GM12878 (cell line): ENCODE measurements at regions of chr11 and their contacts with region 1.

Region 1: DNA sequence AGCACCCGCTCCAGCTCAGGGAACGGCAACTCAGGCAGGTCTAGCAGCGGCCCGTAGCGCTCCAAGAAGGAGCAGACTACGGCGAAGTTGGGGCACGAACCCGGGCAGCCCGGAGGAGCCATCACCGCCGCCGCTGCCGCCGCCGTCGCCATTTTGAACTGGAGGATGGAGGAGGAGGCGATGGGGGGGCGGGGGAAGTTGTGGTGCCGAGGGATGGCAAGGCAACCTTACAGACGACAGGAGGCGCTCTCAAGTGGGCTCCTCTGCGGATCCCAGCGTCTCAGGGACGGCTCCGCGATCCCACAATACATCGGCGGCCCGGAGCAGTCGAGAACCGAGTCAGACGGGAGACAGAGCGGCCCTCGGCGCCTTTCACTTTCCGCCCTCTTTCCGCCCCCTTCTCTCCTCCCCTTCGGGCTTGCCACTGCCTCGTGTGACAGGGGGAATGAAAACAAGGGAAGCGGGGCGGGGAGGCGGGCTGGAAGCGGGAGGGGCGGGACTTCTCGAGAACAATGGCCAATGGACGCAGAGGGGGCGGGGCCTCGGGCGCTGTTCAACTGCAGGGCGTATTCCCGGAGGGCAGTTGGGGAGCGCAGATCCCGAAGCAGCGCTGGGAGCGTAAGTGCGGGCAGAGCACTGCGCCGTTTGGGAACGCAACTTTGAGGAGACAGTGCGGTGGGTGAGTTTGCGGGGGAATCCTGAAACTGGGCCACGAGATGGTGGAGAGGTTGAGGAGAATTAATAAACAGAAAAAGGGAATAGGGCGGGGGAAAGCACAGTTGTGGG is at the starts of genes AAMDC and RSF1:
- DNase-seq: peak; percentile 94
- ATAC-seq: peak; percentile 91
- H3K4me3 ChIP-seq: peak within 1 kb of the TSS; percentile 97
- H3K27ac ChIP-seq: peak within 1 kb of the TSS; percentile 89
- H3K4me1 ChIP-seq: peaks cover 3% of the 10 kb centered on the region; the same call in 1 of the 2 replicates
- H3K27me3 ChIP-seq: no peaks in the 10 kb centered on the region
- CTCF ChIP-seq: peak; percentile 67 to 82 (median 77)
- EP300 ChIP-seq: peak in 1 of 2 experiments; percentile 15; a peak in 1 of 4 replicates
- POLR2A ChIP-seq: peak; percentile 82
- RAD21 ChIP-seq: peak; percentile 55
- polyA plus RNA-seq, gene AAMDC: 37.1 to 38.3 TPM
- polyA plus RNA-seq, gene RSF1: 9.0 to 25.4 TPM

Region 2: GRCh38 chr11:77418155-77418970 is 402.4 kb before region 1 on chr11:
- CTCF ChIA-PET with region 1: no interaction called
- POLR2A ChIA-PET with region 1: no interaction called
- RAD21 ChIA-PET with region 1: no interaction called
- SMC1A ChIA-PET with region 1: no interaction called
- in situ Hi-C with region 1: no loop called
- intact Hi-C with region 1: no loop called
- DNase-seq: no peak
- ATAC-seq: peak; percentile 93
- H3K4me3 ChIP-seq: peak overlapping the region; percentile 31; the same call in 1 of the 2 replicates
- H3K27ac ChIP-seq: peak overlapping the region; percentile 67
- H3K4me1 ChIP-seq: peaks cover 8% of the 10 kb centered on the region
- H3K27me3 ChIP-seq: no peaks in the 10 kb centered on the region
- CTCF ChIP-seq: no peak
- EP300 ChIP-seq: no peak
- POLR2A ChIP-seq: no peak
- RAD21 ChIP-seq: no peak

Region 3: DNA sequence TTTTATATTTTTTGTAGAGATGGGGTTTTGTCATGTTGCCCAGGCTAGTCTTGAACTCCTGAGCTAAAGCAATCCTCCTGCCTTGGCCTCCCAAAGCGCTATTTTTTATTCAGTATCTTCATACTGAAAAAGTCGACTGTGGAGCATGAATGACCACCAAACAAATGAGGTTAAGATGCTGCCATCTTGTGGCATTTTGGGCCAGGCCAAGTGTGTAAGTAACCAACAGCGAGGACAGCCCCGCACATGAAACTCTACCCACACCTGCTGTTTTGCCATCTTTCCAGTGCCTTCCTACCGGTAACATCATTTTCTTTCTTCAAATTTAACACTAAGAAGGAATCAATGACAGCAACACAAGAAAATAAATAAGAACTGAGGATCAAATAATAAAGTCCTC is 263.2 kb before region 1 on chr11:
- CTCF ChIA-PET with region 1: no interaction called
- POLR2A ChIA-PET with region 1: no interaction called
- RAD21 ChIA-PET with region 1: no interaction called
- SMC1A ChIA-PET with region 1: no interaction called
- in situ Hi-C with region 1: no loop called
- intact Hi-C with region 1: no loop called
- DNase-seq: no peak
- ATAC-seq: peak; percentile 53
- H3K4me3 ChIP-seq: no peak overlapping the region
- H3K27ac ChIP-seq: no peak overlapping the region
- H3K4me1 ChIP-seq: no peaks in the 10 kb centered on the region
- H3K27me3 ChIP-seq: no peaks in the 10 kb centered on the region
- CTCF ChIP-seq: peak; percentile 19 to 43 (median 27); a peak in 4 of 6 replicates
- EP300 ChIP-seq: no peak
- POLR2A ChIP-seq: no peak
- RAD21 ChIP-seq: peak; percentile 45; the same call in 1 of the 2 replicates

Region 4: DNA sequence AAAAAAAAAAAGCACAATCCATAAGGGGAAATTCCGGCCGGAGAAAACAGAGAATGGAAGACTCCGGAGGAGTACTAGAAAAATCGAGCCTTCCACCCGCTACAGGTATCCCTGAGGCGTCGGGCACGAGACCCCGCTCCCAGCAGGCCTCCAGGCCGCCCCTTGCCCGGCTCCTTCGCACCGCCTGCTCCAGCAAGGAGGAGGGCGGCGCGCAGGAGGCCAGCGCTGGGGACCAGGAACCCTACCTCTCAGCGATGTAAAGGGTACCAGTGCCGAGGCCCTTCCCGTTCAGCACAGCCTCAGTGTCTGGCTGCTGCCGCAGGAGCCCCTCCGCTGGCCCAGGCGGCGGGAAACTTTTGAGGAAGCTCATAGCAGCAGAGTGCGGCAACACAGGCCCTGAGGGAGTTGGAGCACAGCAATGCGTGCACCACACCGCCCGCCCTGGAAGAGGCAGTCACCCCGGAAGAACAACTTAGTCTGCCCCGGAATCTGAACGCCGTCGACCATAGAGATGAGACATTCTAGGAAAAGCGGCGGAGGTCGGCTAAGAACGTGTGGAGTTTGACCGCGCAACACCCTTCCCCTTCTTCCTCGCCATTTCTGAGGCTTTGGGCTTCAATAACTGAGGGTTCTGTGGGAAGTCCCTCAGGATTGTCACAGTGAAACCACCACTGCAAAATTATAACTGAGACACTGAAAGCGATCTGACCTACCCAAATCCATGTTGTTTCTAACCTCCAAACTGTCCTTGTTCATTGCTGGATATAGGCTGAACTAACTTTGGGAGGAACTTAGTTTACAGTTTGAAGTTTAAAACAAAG is 183.2 kb before region 1 on chr11 and contains the start of gene CLNS1A:
- CTCF ChIA-PET with region 1: no interaction called
- POLR2A ChIA-PET with region 1: no interaction called
- RAD21 ChIA-PET with region 1: no interaction called
- SMC1A ChIA-PET with region 1: no interaction called
- in situ Hi-C with region 1: no loop called
- intact Hi-C with region 1: loop called (anchors 2 kb)
- DNase-seq: peak; percentile 68
- ATAC-seq: peak; percentile 99
- H3K4me3 ChIP-seq: peak within 1 kb of the TSS; percentile 90
- H3K27ac ChIP-seq: peak within 1 kb of the TSS; percentile 88
- H3K4me1 ChIP-seq: peaks cover 7% of the 10 kb centered on the region
- H3K27me3 ChIP-seq: no peaks in the 10 kb centered on the region
- CTCF ChIP-seq: no peak
- EP300 ChIP-seq: peak in 1 of 2 experiments; percentile 49; a peak in 1 of 4 replicates
- POLR2A ChIP-seq: peak; percentile 99
- RAD21 ChIP-seq: no peak
- polyA plus RNA-seq, gene CLNS1A: 74.1 to 99.7 TPM

Region 5: GRCh38 chr11:77725433-77725832 is 95.3 kb before region 1 on chr11:
- CTCF ChIA-PET with region 1: no interaction called
- POLR2A ChIA-PET with region 1: no interaction called
- RAD21 ChIA-PET with region 1: no interaction called
- SMC1A ChIA-PET with region 1: no interaction called
- in situ Hi-C with region 1: no loop called
- intact Hi-C with region 1: loop called (anchors 5 kb)
- DNase-seq: peak; percentile 68
- ATAC-seq: peak; percentile 88
- H3K4me3 ChIP-seq: no peak overlapping the region
- H3K27ac ChIP-seq: peak overlapping the region; percentile 49
- H3K4me1 ChIP-seq: peaks cover 14% of the 10 kb centered on the region
- H3K27me3 ChIP-seq: no peaks in the 10 kb centered on the region
- CTCF ChIP-seq: no peak
- EP300 ChIP-seq: no peak
- POLR2A ChIP-seq: no peak
- RAD21 ChIP-seq: no peak

Region 6: GRCh38 chr11:77776455-77776854 is 44.3 kb before region 1 on chr11:
- CTCF ChIA-PET with region 1: no interaction called
- POLR2A ChIA-PET with region 1: no interaction called
- RAD21 ChIA-PET with region 1: no interaction called
- SMC1A ChIA-PET with region 1: no interaction called
- in situ Hi-C with region 1: no loop called
- intact Hi-C with region 1: loop called (anchors 5 kb)
- DNase-seq: no peak
- ATAC-seq: peak; percentile 62
- H3K4me3 ChIP-seq: no peak overlapping the region
- H3K27ac ChIP-seq: no peak overlapping the region
- H3K4me1 ChIP-seq: no peaks in the 10 kb centered on the region
- H3K27me3 ChIP-seq: no peaks in the 10 kb centered on the region
- CTCF ChIP-seq: peak; percentile 3 to 46 (median 18); a peak in 4 of 6 replicates
- EP300 ChIP-seq: no peak
- POLR2A ChIP-seq: no peak
- RAD21 ChIP-seq: peak; percentile 50

Region 7: DNA sequence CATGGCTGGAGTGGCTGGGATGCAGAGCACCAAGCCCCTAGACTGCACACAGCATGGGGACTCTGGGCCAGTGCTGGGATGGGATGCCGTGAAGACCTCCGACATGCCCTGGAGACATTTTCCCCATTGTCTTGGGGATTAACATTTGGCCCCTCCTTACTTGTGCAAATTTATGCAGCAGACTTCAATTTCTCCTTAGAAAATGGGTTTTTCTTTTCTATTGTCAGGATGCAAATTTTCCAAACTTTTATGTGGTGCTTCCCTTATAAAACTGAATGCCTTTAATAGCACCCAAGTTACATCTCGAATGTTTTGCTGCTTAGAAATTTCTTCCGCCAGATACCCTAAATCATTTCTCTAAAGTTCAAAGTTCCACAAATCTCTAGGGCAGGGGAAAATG is 29.5 kb before region 1 on chr11:
- CTCF ChIA-PET with region 1: no interaction called
- POLR2A ChIA-PET with region 1: no interaction called
- RAD21 ChIA-PET with region 1: no interaction called
- SMC1A ChIA-PET with region 1: no interaction called
- in situ Hi-C with region 1: no loop called
- intact Hi-C with region 1: no loop called
- DNase-seq: no peak
- ATAC-seq: no peak
- H3K4me3 ChIP-seq: no peak overlapping the region
- H3K27ac ChIP-seq: no peak overlapping the region
- H3K4me1 ChIP-seq: no peaks in the 10 kb centered on the region
- H3K27me3 ChIP-seq: no peaks in the 10 kb centered on the region
- CTCF ChIP-seq: no peak
- EP300 ChIP-seq: no peak
- POLR2A ChIP-seq: no peak
- RAD21 ChIP-seq: no peak